ENCODE measurements at regions of chr17 and their contacts with region 1.

Region 1: DNA sequence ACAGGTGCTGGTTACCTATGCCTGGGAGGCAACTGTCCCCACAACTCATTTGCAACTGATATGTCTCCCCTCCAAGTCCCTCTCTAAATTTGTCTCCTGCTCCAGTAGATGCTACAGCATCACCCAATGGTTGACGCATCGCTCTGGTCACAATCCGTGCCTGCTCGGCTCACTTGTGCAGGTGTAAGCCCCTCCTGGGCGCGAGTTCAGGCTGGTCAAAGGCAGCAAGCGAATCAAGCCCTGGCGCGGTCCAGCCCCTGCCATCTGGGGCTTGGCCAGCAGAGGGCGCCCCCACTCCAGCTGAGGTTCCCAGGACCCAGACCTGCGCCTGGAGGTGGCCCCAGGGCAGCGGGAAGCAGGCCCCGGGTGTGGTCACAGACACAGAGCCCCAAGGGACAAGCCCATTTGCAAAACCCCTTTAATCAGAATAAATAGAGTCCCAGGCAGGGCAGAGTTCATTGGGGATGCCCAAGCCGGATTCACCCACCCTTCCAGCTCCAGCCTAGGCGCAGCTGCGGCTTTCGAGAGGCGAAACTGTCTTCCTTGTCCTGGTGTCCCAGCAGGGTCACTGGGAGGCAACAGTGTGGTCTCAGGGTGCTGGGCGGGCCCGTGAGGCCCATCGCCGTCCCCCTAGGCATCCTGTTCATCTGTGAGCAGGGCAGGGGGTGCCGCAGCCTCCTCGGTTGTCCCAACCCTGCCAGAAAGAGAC is 15.9 kb downstream of the TMC6 start:
- DNase-seq: peak; percentile 89
- ATAC-seq: peak; percentile 60
- H3K4me3 Mint-ChIP-seq: no peak overlapping the region
- H3K27ac Mint-ChIP-seq: peak overlapping the region; percentile 83
- H3K4me1 Mint-ChIP-seq: peaks cover 35% of the 10 kb centered on the region
- H3K27me3 Mint-ChIP-seq: no peaks in the 10 kb centered on the region

Region 2: DNA sequence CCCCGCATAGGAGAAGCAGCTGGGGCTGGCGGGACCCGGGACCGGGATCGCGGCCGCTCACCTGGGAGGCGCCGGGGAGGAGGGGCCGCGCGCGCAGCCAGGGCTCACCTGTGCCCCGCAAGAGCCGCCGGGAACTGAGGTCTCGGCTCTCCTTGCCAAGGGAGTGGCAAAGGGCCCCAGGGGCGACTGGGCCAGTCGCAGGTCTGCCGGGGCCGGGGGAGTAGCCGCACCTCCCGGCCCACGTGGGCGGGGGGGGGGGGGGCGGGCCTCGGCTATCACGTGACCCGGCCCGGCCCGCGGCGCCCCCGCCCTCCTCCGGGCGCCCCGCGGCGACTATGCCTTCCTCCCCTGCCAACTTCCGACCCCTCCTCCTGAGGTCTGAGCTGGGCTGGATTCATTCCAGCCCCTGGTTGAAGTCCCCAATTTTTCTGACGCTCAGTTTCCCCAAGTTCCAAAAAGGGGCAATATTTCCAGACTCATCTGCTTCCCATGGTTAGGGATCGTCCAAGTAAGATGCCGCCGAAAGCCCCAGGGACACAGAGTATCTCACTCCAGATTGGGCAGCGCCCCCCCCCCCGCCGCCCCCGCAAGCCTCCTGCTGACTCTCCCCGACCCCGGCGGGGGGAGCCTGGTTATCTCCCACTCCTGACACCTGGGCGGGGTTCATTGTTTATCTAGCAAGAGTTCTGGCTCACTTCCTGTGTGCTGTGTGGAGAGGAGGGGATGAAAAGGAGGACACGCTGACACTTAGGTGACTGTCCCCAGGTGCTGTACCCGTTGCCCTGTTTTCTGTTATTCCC is 16.1 kb after region 1 on chr17 and contains the start of gene TMC6:
- CTCF ChIA-PET with region 1: interaction called, 42 read pairs
- POLR2A ChIA-PET with region 1: interaction called, 5 read pairs
- intact Hi-C with region 1: loop called in 1 of 2 experiments (anchors 1 kb)
- DNase-seq: peak; percentile 87
- ATAC-seq: peak; percentile 31
- H3K4me3 Mint-ChIP-seq: peak within 1 kb of the TSS; percentile 94
- H3K27ac Mint-ChIP-seq: peak within 1 kb of the TSS; percentile 96
- H3K4me1 Mint-ChIP-seq: peaks cover 52% of the 10 kb centered on the region
- H3K27me3 Mint-ChIP-seq: no peaks in the 10 kb centered on the region
- total RNA-seq, gene TMC6: 138 to 145 TPM

Region 3: GRCh38 chr17:78168242-78168902 is 55.7 kb after region 1 on chr17 and contains the start of gene SYNGR2:
- CTCF ChIA-PET with region 1: interaction called, 3 read pairs
- POLR2A ChIA-PET with region 1: no interaction called
- intact Hi-C with region 1: loop called in 1 of 2 experiments (anchors 2 kb)
- DNase-seq: peak; percentile 93
- ATAC-seq: peak; percentile 79
- H3K4me3 Mint-ChIP-seq: peak within 1 kb of the TSS; percentile 71
- H3K27ac Mint-ChIP-seq: peak within 1 kb of the TSS; percentile 69
- H3K4me1 Mint-ChIP-seq: peaks cover 35% of the 10 kb centered on the region
- H3K27me3 Mint-ChIP-seq: no peaks in the 10 kb centered on the region
- total RNA-seq, gene SYNGR2: 79.1 to 89.2 TPM

Region 4: DNA sequence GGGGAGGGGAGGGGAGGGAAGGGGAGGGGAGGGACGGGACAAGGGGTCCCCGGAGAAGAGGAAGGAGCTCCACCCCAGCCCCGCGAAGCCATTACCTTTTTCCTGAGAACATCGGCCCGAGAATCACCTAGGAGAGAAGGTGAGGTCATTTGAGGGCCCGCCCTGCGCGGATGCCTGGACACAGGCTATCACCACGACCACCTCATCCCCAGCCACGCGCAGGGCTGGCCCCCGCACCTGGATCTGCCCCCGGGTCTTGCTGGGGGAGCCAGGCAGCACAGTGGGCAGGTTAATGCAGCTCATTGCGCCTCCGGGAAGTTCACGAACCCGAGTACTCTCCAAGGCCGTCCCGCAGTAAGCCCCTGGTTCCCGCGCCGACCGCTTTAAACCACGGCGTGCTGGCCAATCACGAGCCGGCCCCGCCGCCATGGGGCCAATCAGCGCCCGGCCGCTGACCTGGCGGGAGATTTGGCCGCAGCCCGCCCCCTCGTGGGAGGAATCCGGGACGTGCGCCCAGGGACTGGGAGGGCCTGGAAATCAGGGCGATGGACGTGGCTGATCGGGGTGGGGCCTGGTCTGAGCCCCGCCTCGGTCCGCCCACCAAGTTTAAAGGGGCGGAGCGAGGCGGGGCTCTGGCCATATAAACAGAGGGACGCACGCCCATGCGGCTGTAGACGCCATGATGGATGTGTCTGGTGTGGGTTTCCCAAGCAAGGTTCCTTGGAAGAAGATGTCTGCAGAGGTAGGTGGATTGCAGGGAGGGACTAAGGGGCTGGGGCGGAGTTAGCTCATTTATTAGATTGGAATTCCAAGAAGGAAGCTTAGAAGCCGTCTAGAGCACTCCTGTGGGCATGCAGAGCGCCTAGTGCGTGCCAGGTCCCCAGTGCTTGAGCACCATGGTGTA is 74.3 kb after region 1 on chr17 and contains the starts of genes AFMID and TK1:
- CTCF ChIA-PET with region 1: interaction called, 4 read pairs
- POLR2A ChIA-PET with region 1: no interaction called
- intact Hi-C with region 1: loop called in 1 of 2 experiments (anchors 2 kb)
- DNase-seq: peak; percentile 98
- ATAC-seq: peak; percentile 96
- H3K4me3 Mint-ChIP-seq: peak within 1 kb of the TSS; percentile 78
- H3K27ac Mint-ChIP-seq: peak within 1 kb of the TSS; percentile 73
- H3K4me1 Mint-ChIP-seq: peaks cover 26% of the 10 kb centered on the region
- H3K27me3 Mint-ChIP-seq: no peaks in the 10 kb centered on the region
- total RNA-seq, gene AFMID: 26.3 to 26.7 TPM
- total RNA-seq, gene TK1: 157 to 195 TPM

Region 5: DNA sequence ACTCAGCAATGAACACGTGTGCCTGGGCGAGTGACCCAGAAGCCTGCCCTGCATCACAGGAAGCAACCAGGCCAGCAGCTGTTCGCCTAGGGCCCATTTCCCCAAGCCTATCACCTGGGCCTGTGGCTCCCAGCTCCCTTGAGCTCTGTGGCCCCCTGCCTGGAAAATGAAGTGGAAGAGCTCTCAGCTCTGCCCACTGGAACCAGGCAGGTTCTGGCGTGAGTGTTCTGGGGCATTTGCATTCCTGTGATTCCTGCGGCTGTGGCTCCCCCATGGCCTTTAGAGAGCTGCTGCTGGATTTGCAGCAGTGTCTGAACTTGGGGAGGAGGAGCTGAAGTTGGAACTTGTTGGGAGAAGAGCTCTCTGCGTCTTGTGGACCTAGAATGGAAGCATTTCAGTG is 288.6 kb after region 1 on chr17:
- CTCF ChIA-PET with region 1: no interaction called
- POLR2A ChIA-PET with region 1: no interaction called
- intact Hi-C with region 1: no loop called
- DNase-seq: no peak
- ATAC-seq: no peak
- H3K4me3 Mint-ChIP-seq: no peak overlapping the region
- H3K27ac Mint-ChIP-seq: no peak overlapping the region
- H3K4me1 Mint-ChIP-seq: peaks cover 4% of the 10 kb centered on the region
- H3K27me3 Mint-ChIP-seq: no peaks in the 10 kb centered on the region

Measured in activated CD4-positive, alpha-beta T cell treated with anti-CD3 and anti-CD28 coated beads for 36 hours (primary cell).